Colonic mucosa (tissue), 4 donors: ENCODE measurements at regions of chr16 and their contacts with region 1.

Region 1: GRCh38 chr16:88022076-88023062 is 71.1 kb downstream of the BANP start:
- DNase-seq: no peak
- H3K4me3 ChIP-seq: no peak overlapping the region
- H3K27ac ChIP-seq: no peak overlapping the region
- H3K4me1 ChIP-seq: no peaks in the 10 kb centered on the region
- H3K27me3 ChIP-seq: no peaks in the 10 kb centered on the region
- CTCF ChIP-seq: no peak

Region 2: GRCh38 chr16:87963400-87963799 is 59.0 kb before region 1 on chr16:
- intact Hi-C with region 1: loop called (anchors 10 kb)
- DNase-seq: no peak
- H3K4me3 ChIP-seq: no peak overlapping the region
- H3K27ac ChIP-seq: no peak overlapping the region
- H3K4me1 ChIP-seq: peaks cover 5% of the 10 kb centered on the region
- H3K27me3 ChIP-seq: no peaks in the 10 kb centered on the region
- CTCF ChIP-seq: no peak